ENCODE measurements at regions of chr1 and their contacts with region 1.

Region 1: DNA sequence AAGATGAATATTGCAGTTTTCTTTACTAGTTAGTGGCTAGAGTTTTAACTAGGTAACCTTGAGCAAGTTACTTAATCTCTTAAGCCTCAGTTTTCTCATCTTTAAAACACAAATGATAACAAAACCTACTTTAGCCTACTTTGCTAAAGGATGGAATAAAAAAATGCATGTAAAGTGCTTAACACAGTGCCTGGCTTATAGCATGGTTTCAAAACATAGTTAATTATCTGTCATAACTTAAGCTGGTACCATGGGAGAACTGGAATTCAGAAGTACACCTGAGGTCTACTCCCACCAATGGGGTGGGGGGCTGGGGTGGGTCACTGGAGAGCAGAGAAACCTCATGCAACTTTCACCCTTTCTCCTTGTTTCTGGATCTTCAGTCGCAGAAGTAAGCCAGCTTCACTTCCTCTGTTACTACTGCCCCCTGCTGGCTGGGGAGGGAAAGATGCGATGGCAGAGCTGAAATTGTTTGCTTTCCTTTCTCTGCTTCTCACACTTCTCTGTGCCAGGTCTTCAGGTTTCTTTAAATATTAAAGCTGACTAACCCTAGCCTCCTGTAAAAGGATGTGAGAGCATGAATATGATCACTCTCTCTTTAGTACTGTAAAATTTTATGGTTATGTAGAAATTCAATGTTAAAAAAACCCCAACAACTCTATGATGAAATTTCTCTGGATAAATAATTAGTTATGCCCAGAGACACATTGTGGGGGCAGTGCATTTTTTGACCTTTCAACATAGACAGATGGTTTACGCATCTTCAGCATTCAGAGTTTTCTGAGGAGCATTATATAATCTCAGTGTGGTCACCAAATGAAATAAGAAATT is 324.2 kb downstream of the HLX start:
- DNase-seq: peak; percentile 70 to 87 (median 79)
- ATAC-seq: peak; percentile 92 to 99 (median 96)
- H3K4me3 ChIP-seq: no peak overlapping the region
- H3K27ac ChIP-seq: peak overlapping the region in 1 of 3 donors; percentile 37
- H3K4me1 ChIP-seq: peaks cover 0 to 11% (median 4%) of the 10 kb centered on the region in 4 donors
- H3K27me3 ChIP-seq: no peaks in the 10 kb centered on the region
- CTCF ChIP-seq: peak; percentile 83 to 93 (median 90)
- POLR2A ChIP-seq: no peak

Region 2: GRCh38 chr1:220879509-220880361 is 323.7 kb before region 1 on chr1:
- intact Hi-C with region 1: loop called in 1 of 2 experiments (anchors 10 kb)
- DNase-seq: peak; percentile 71 to 79 (median 75)
- ATAC-seq: peak; percentile 39 to 73 (median 70)
- H3K4me3 ChIP-seq: peak overlapping the region; percentile 81 to 93 (median 83)
- H3K27ac ChIP-seq: peak overlapping the region; percentile 95 to 99 (median 99)
- H3K4me1 ChIP-seq: peaks cover 0 to 32% (median 14%) of the 10 kb centered on the region in 4 donors
- H3K27me3 ChIP-seq: no peaks in the 10 kb centered on the region
- CTCF ChIP-seq: no peak
- POLR2A ChIP-seq: peak; percentile 28